Activated CD4-positive, alpha-beta memory T cell treated with anti-CD3 and anti-CD28 coated beads, Interleukin-2, amount 10 ng/mL, durations not matched to agents 7 days and 5 days (primary cell): ENCODE measurements at regions of chr16 and their contacts with region 1.

Region 1: GRCh38 chr16:24504472-24505345 is 34.7 kb upstream of the RBBP6 start:
- DNase-seq: peak; percentile 64
- H3K4me3 Mint-ChIP-seq: no peak overlapping the region
- H3K27ac Mint-ChIP-seq: no peak overlapping the region
- H3K4me1 Mint-ChIP-seq: peaks cover 4% of the 10 kb centered on the region
- H3K27me3 Mint-ChIP-seq: peaks cover 7% of the 10 kb centered on the region

Region 2: DNA sequence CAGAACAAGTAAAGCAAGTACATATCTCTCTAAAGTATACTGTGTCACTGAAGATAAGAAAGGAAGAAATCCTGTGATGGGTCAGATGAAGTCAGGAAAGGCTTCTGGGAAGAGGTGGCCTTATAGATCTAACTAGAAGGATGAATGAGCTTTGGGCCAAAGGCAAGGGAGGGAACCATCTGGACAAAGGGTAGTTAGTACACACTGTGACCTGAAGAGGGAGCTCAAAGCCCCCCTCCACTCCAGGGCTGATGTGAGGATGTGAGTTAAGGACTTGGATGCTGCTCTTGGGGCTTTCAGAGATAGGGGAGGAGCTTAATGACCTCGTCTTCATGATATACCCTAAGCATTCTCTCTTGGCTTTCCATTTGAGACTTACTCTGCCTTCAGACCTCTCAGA is 433.9 kb before region 1 on chr16:
- CTCF ChIA-PET with region 1: interaction called, 26 read pairs
- POLR2A ChIA-PET with region 1: interaction called, 3 read pairs
- DNase-seq: peak; percentile 44
- H3K4me3 Mint-ChIP-seq: no peak overlapping the region
- H3K27ac Mint-ChIP-seq: no peak overlapping the region
- H3K4me1 Mint-ChIP-seq: peaks cover 40% of the 10 kb centered on the region
- H3K27me3 Mint-ChIP-seq: no peaks in the 10 kb centered on the region

Region 3: GRCh38 chr16:24516900-24517669 is 12.4 kb after region 1 on chr16:
- CTCF ChIA-PET with region 1: interaction called, 18 read pairs
- POLR2A ChIA-PET with region 1: interaction called, 3 read pairs
- DNase-seq: peak; percentile 78
- H3K4me3 Mint-ChIP-seq: no peak overlapping the region
- H3K27ac Mint-ChIP-seq: no peak overlapping the region
- H3K4me1 Mint-ChIP-seq: peaks cover 11% of the 10 kb centered on the region
- H3K27me3 Mint-ChIP-seq: peaks cover 7% of the 10 kb centered on the region